A673 (cell line): ENCODE measurements at regions of chr1 and their contacts with region 1.

Region 1: DNA sequence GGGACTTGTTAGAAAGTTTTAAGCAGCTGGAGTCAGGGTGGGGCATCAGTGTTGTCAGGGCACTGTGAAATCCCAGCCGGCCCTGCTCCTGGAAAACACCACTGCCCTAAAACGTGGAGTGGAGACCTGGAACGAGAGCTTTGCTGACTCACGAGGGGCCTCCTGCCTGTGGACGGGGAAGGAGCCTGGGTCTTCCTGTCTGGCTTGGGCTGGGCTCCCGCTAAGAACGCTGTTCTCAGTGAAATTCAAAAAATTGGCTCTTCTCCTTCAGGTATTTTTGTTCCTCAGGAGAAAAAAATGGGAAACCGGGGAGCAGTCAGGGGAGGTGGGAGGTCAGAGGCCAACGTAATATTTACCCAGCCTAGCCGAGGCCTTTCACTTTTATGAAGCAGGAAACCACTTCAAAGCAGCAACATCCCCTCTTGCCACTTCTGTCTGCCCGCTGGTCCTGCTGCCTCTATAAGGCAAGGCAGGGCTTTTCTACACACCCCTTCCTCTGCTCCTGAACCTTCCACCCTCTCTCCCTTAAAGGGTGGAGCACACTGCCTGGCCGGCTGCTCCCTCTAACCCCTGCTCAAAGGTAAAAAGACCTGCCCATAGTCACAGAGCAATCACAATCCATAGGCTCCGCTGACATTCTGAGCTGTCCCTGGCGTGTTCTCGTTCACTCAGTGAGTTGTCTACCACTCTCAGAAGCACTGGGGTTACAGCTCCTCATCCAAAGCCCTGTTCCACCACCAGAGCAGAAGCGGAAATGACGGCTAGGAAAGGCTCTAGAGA is 8.0 kb downstream of the PLXNA2 start:
- DNase-seq: no peak
- H3K4me3 ChIP-seq: no peak overlapping the region
- H3K27ac ChIP-seq: no peak overlapping the region
- H3K4me1 ChIP-seq: no peaks in the 10 kb centered on the region
- H3K27me3 ChIP-seq: peaks cover 54% of the 10 kb centered on the region
- CTCF ChIP-seq: no peak

Region 2: GRCh38 chr1:208047476-208047934 is 188.7 kb before region 1 on chr1:
- CTCF ChIA-PET with region 1: no interaction called
- POLR2A ChIA-PET with region 1: no interaction called
- intact Hi-C with region 1: no loop called
- DNase-seq: no peak
- H3K4me3 ChIP-seq: no peak overlapping the region
- H3K27ac ChIP-seq: no peak overlapping the region
- H3K4me1 ChIP-seq: no peaks in the 10 kb centered on the region
- H3K27me3 ChIP-seq: peaks cover 9% of the 10 kb centered on the region
- CTCF ChIP-seq: no peak

Region 3: GRCh38 chr1:208216062-208216461 is 20.1 kb before region 1 on chr1:
- CTCF ChIA-PET with region 1: no interaction called
- POLR2A ChIA-PET with region 1: no interaction called
- intact Hi-C with region 1: loop called (anchors 2 kb)
- DNase-seq: no peak
- H3K4me3 ChIP-seq: no peak overlapping the region
- H3K27ac ChIP-seq: no peak overlapping the region
- H3K4me1 ChIP-seq: no peaks in the 10 kb centered on the region
- H3K27me3 ChIP-seq: peaks cover 11% of the 10 kb centered on the region
- CTCF ChIP-seq: no peak

Region 4: DNA sequence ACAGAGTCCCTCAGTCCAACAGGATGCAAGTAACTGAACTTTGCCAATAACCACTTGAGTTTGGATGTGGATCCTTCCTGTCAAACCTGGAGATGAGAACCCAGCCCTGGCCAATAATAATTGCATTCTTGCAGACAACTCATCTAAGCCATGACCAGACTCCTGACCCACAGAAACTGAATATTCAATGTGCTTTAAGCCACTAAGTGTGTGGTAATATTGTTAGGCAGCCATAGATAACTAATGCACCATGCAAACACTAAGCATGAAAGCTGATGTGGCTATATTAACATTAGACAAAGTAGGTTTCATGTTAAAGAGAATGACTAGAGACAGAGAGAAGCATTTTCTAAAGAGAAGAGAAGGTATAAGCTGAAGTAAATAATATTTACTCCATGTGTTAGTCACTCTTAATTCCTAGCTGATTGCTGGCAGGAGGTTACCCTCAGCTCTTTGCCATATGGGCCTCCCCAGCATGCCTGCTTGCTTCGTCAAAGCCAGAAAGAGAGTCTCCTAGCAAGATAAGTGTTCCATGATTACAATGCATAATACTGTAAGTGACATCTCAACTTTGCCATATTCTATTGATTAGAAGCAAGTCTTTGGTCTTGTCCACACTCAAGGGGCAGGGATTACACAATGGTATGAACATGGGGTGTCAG is 284.4 kb after region 1 on chr1:
- CTCF ChIA-PET with region 1: no interaction called
- POLR2A ChIA-PET with region 1: no interaction called
- intact Hi-C with region 1: no loop called
- DNase-seq: no peak
- H3K4me3 ChIP-seq: no peak overlapping the region
- H3K27ac ChIP-seq: no peak overlapping the region
- H3K4me1 ChIP-seq: no peaks in the 10 kb centered on the region
- H3K27me3 ChIP-seq: peaks cover 8% of the 10 kb centered on the region
- CTCF ChIP-seq: no peak